ENCODE measurements at regions of chr1 and their contacts with region 1.

Region 1: DNA sequence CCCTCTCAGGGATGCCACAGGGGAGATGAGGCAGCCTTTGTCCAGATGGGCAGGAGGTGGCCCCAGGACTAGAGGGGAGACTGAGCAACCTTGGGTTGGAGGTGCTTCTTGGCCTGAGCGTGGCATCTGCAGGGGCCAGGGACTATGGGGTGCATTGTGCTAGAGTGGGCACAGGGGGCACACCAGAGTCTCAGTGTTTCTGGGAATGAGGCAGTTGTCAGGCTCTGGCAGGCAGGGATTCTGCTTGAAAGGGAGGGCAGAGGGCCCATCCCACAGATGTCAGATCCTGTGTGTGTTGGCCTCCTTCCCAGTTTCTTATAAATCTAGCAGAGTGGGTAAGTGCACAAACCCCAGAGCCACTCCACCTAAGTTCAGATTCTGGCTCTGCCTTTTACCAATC is 13.7 kb downstream of the LGR6 start:
- DNase-seq: peak; percentile 30
- H3K4me3 ChIP-seq: no peak overlapping the region
- H3K27ac ChIP-seq: no peak overlapping the region
- H3K4me1 ChIP-seq: no peaks in the 10 kb centered on the region
- H3K27me3 ChIP-seq: no peaks in the 10 kb centered on the region
- CTCF ChIP-seq: no peak

Region 2: DNA sequence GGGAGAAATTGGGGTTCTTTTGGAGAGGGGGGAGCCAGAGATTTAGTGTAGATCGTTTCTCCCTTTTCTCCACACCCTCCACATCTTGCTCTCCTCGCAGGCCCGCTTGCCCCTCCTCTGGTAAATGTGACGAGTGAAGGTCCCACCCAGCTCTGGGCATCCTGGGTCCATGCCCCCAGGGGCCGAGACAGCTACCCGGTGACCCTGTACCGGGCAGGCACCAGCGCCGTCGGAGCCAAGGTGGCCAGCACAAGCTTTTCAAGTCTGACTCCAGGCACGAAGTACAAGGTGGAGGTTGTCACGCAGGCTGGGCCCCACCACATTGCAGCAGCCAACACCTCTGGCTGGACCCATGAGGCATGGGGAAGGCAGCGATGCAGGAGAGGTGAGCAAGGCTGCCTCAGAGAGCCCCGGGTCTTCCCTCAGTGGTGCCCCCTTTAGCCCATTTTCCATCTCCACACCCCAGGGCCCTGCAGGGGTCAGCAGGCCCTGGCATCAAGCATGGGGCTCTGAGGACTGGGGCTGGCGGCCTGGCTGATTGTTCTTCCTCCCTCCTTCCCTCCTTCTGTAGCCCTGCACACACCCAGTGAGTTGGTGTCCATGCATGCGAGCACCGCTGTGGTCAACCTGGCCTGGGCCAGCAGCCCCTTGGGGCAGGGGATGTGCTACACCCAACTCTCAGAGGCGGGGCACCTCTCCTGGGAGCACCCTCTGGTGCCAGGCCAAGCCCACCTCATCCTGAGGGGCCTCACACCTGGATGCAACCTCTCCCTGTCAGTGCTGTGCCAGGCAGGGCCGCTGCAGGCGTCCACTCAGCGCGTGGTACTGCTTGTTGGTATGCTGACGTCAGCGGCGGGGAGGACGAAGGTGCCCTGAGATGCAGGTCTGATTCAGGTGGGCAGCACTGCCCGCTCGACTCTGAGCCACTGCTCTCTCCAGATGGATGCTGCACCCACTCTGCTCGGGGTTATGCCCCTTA is 30.1 kb before region 1 on chr1:
- CTCF ChIA-PET with region 1: no interaction called
- dilution Hi-C with region 1: loop called (anchors 5 kb)
- in situ Hi-C with region 1: no loop called
- intact Hi-C with region 1: no loop called
- DNase-seq: no peak
- H3K4me3 ChIP-seq: no peak overlapping the region
- H3K27ac ChIP-seq: no peak overlapping the region
- H3K4me1 ChIP-seq: no peaks in the 10 kb centered on the region
- H3K27me3 ChIP-seq: no peaks in the 10 kb centered on the region
- CTCF ChIP-seq: no peak

Region 3: DNA sequence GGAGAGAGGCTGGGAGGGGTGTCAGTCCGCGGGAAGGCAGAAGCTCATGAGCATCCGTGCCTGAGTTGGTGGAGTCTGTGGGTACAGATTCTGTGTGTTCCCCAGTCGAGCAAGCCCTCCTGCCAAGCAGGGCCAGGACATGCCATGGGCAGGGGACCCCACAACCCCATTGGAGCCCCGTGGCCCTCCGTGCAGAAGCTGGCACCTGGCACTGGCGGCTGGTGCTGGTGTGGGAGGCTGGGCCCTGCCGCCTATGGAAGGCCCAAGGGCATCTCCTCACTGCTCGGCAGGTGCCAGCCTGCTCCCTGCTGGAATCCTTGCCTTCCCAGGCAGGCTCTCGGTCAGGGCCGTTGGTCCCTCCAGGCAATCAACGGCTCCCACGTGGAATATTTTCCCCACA is 60.7 kb after region 1 on chr1:
- CTCF ChIA-PET with region 1: interaction called, 30 read pairs
- dilution Hi-C with region 1: loop called (anchors 10 kb)
- in situ Hi-C with region 1: no loop called
- intact Hi-C with region 1: loop called (anchors 1 kb)
- DNase-seq: no peak
- H3K4me3 ChIP-seq: no peak overlapping the region
- H3K27ac ChIP-seq: no peak overlapping the region
- H3K4me1 ChIP-seq: no peaks in the 10 kb centered on the region
- H3K27me3 ChIP-seq: peaks cover 7% of the 10 kb centered on the region
- CTCF ChIP-seq: peak in 1 of 2 donors; percentile 30

Region 4: DNA sequence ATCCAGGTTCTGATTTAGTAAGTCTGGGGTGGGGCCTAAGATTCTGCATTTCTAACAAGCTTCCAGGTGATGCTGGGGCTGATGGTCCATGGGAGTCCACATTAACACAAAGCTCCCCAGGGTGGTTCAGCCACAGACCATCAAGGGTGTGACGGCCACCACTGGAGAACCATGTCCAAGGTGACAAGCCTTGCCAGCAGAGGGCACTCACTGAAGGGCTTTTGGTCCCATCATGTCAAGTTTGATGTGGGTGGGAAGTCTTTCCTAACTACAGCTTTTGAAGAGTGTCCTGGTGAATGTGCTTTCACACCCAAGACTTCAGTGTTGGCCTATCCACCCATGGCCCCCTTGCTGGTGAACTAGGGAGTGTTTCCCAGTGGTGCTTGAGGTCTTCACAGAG is 67.3 kb after region 1 on chr1:
- CTCF ChIA-PET with region 1: interaction called, 3 read pairs
- dilution Hi-C with region 1: loop called (anchors 10 kb)
- in situ Hi-C with region 1: no loop called
- intact Hi-C with region 1: loop called (anchors 1 kb)
- DNase-seq: no peak
- H3K4me3 ChIP-seq: no peak overlapping the region
- H3K27ac ChIP-seq: no peak overlapping the region
- H3K4me1 ChIP-seq: no peaks in the 10 kb centered on the region
- H3K27me3 ChIP-seq: peaks cover 3% of the 10 kb centered on the region
- CTCF ChIP-seq: peak; percentile 48 to 72

Region 5: GRCh38 chr1:202304375-202304774 is 97.1 kb after region 1 on chr1:
- CTCF ChIA-PET with region 1: no interaction called
- dilution Hi-C with region 1: loop called (anchors 5 kb)
- in situ Hi-C with region 1: no loop called
- intact Hi-C with region 1: no loop called
- DNase-seq: no peak
- H3K4me3 ChIP-seq: no peak overlapping the region
- H3K27ac ChIP-seq: no peak overlapping the region
- H3K4me1 ChIP-seq: no peaks in the 10 kb centered on the region
- H3K27me3 ChIP-seq: no peaks in the 10 kb centered on the region
- CTCF ChIP-seq: no peak

Region 6: GRCh38 chr1:202315576-202316168 is 108.4 kb after region 1 on chr1:
- CTCF ChIA-PET with region 1: no interaction called
- dilution Hi-C with region 1: no loop called
- in situ Hi-C with region 1: loop called in 1 of 2 experiments (anchors 5 kb)
- intact Hi-C with region 1: loop called (anchors 1 kb)
- DNase-seq: peak; percentile 44
- H3K4me3 ChIP-seq: no peak overlapping the region
- H3K27ac ChIP-seq: no peak overlapping the region
- H3K4me1 ChIP-seq: peaks cover 6% of the 10 kb centered on the region
- H3K27me3 ChIP-seq: no peaks in the 10 kb centered on the region
- CTCF ChIP-seq: peak; percentile 99